ENCODE measurements at regions of chr7 and their contacts with region 1.

Region 1: GRCh38 chr7:143901668-143902331 is at the start of gene TCAF1:
- DNase-seq: peak; percentile 94
- H3K4me3 ChIP-seq: peak within 1 kb of the TSS; percentile 92 to 98 (median 93)
- H3K27ac ChIP-seq: peak within 1 kb of the TSS; percentile 95
- H3K4me1 ChIP-seq: peaks cover 14% of the 10 kb centered on the region
- H3K27me3 ChIP-seq: no peaks in the 10 kb centered on the region
- CTCF ChIP-seq: peak in 1 of 2 donors; percentile 49
- total RNA-seq, gene TCAF1: 37.5 to 62.7 TPM

Region 2: GRCh38 chr7:143929224-143929920 is 27.6 kb after region 1 on chr7:
- CTCF ChIA-PET with region 1: no interaction called
- dilution Hi-C with region 1: no loop called
- in situ Hi-C with region 1: no loop called
- intact Hi-C with region 1: no loop called
- DNase-seq: no peak
- H3K4me3 ChIP-seq: no peak overlapping the region
- H3K27ac ChIP-seq: no peak overlapping the region
- H3K4me1 ChIP-seq: no peaks in the 10 kb centered on the region
- H3K27me3 ChIP-seq: no peaks in the 10 kb centered on the region
- CTCF ChIP-seq: no peak

Region 3: GRCh38 chr7:143958781-143959180 is 57.0 kb after region 1 on chr7:
- CTCF ChIA-PET with region 1: no interaction called
- dilution Hi-C with region 1: no loop called
- in situ Hi-C with region 1: no loop called
- intact Hi-C with region 1: loop called (anchors 2 kb)
- DNase-seq: no peak
- H3K4me3 ChIP-seq: no peak overlapping the region
- H3K27ac ChIP-seq: no peak overlapping the region
- H3K4me1 ChIP-seq: no peaks in the 10 kb centered on the region
- H3K27me3 ChIP-seq: no peaks in the 10 kb centered on the region
- CTCF ChIP-seq: no peak

Region 4: GRCh38 chr7:144011458-144012230 is 109.8 kb after region 1 on chr7:
- CTCF ChIA-PET with region 1: no interaction called
- dilution Hi-C with region 1: no loop called
- in situ Hi-C with region 1: no loop called
- intact Hi-C with region 1: loop called (anchors 5 kb)
- DNase-seq: peak; percentile 10
- H3K4me3 ChIP-seq: no peak overlapping the region
- H3K27ac ChIP-seq: no peak overlapping the region
- H3K4me1 ChIP-seq: no peaks in the 10 kb centered on the region
- H3K27me3 ChIP-seq: no peaks in the 10 kb centered on the region
- CTCF ChIP-seq: peak; percentile 30 to 47

Region 5: GRCh38 chr7:144027070-144027469 is 125.3 kb after region 1 on chr7:
- CTCF ChIA-PET with region 1: interaction called, 13 read pairs
- dilution Hi-C with region 1: no loop called
- in situ Hi-C with region 1: no loop called
- intact Hi-C with region 1: no loop called
- DNase-seq: no peak
- H3K4me3 ChIP-seq: no peak overlapping the region
- H3K27ac ChIP-seq: no peak overlapping the region
- H3K4me1 ChIP-seq: no peaks in the 10 kb centered on the region
- H3K27me3 ChIP-seq: no peaks in the 10 kb centered on the region
- CTCF ChIP-seq: peak in 1 of 2 donors; percentile 47

Region 6: GRCh38 chr7:144164784-144165183 is 263.0 kb after region 1 on chr7:
- CTCF ChIA-PET with region 1: no interaction called
- dilution Hi-C with region 1: no loop called
- in situ Hi-C with region 1: no loop called
- intact Hi-C with region 1: no loop called
- DNase-seq: no peak
- H3K4me3 ChIP-seq: no peak overlapping the region
- H3K27ac ChIP-seq: no peak overlapping the region
- H3K4me1 ChIP-seq: no peaks in the 10 kb centered on the region
- H3K27me3 ChIP-seq: no peaks in the 10 kb centered on the region
- CTCF ChIP-seq: no peak

Measured in mammary epithelial cell (primary cell).